HEK293 (cell line): ENCODE measurements at regions of chr9 and their contacts with region 1.

Region 1: DNA sequence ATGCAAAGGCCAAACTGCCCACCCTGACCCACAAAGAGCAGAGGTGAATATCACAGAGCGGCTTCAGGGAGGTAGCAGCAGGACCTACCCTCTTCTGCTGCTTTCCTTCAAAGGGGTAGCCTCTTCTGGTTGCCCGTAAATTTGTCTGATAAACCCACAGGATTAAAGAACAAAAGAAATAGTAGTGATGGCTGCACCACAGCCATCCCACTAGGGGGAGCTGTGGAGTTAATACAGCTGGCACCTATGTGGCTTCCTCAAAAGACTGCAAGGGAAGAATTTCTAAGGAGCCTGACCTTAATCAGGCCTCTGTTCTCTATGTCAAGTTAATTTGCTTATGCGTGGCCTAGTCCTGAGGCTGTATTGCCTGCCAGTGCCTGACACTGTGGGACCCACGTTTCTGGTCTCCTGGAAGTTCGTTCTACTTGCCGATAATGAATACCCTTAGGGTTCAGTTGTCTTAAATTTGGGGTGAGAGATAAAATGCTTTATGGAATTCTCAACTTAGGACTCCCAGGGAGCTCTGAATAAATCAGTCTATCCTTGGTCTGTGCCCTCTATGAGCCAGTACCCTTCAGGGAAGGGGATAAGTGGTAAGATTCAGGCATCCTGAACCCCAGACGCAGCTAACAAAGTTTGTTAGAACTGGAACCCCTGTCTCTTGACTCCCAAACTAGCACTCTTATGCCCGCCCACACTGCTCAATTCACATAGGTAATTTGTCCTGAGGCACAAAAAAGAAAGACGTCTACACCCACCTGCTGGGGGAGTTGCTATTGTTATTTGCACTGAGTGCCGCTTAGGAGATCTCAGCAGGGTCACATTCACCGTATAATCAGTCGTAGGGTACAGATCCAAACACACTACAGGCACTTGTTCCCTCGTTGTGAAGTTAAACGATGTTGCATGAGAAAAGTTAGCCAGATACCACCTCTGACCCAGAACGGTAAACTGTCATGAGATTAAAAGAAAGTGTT is 77.1 kb downstream of the SUSD1 start:
- H3K4me3 ChIP-seq: no peak overlapping the region
- H3K27ac ChIP-seq: no peak overlapping the region
- H3K4me1 ChIP-seq: no peaks in the 10 kb centered on the region
- CTCF ChIP-seq: 0 out of 2 replicates have a peak, but pooled peaks have one; percentile 11

Region 2: DNA sequence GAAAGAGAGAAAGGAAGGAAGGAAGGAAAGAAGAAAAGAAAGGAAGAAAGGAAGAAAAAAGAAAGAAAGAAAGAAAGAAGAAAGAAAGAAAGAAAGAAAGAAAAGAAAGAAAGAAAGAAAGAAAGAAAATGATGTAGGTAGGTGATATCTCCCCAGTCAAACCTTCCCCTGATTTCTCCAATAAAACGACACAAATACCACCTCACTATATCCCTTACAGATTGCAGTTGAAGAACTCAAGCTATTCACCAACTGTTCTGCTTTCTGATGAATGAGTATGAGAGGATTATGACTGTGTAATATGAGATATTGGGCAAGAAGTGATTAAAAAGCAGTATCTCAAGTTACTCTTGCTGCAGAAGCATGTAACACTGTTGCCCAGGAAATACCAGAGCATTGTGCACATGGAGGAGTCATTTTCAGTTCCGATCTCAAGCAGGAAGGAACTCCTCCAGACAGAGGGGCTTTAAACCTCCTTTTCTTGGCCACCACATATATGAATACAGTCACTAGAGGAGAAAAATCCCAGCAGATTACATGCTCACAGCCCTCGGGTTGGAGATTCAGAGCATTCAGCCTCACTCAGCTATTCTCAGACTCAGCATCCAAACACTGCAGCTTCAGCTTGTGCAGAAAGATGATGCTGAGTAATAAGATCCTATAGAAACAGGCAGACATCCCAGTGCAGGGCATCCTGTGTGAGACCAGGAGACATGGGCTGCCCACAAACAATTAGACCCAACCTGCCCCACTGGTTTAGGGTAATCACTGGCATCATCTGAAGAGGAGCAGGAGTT is 139.9 kb before region 1 on chr9:
- CTCF ChIA-PET with region 1: no interaction called
- POLR2A ChIA-PET with region 1: no interaction called
- H3K4me3 ChIP-seq: peak overlapping the region; percentile 11
- H3K27ac ChIP-seq: no peak overlapping the region
- H3K4me1 ChIP-seq: peaks cover 19% of the 10 kb centered on the region
- CTCF ChIP-seq: no peak

Region 3: GRCh38 chr9:112086627-112087026 is 11.4 kb before region 1 on chr9:
- CTCF ChIA-PET with region 1: interaction called, 54 read pairs
- POLR2A ChIA-PET with region 1: no interaction called
- H3K4me3 ChIP-seq: no peak overlapping the region
- H3K27ac ChIP-seq: no peak overlapping the region
- H3K4me1 ChIP-seq: no peaks in the 10 kb centered on the region
- CTCF ChIP-seq: no peak

Region 4: DNA sequence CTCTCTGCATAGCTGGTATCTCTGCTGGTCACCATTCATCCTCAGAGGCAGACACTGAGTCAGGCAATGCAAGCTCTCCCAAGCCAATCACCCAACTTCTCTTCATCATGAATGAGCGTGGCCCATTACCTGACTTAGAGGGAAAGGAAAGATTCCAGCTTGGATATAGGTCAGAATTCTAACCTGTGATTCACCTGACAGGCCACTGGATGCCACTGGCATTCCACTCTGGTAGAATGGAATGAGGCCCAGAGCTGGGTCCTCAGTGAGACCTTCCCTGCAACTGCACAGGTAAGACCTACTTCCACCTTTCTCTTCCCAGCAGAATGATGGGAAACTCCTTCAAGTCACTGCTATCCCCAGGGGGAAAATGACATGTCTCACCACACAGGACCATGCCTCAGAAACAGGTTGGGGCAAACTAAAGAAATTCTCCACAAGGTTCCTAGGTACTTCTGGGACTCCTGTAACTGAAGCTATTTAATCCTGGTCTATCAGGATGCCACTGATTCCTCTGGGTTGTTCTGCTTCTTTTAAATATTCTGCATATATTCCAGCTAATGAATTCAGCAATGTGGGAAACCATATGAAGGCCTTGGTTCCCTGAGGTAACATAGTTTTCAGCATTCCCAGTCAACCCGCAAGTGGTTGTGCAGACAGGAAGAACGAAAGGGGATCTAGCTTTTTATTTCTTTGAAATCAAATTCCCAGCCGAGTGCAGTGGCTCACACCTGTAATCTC is 15.1 kb after region 1 on chr9:
- CTCF ChIA-PET with region 1: interaction called, 26 read pairs
- POLR2A ChIA-PET with region 1: no interaction called
- H3K4me3 ChIP-seq: no peak overlapping the region
- H3K27ac ChIP-seq: no peak overlapping the region
- H3K4me1 ChIP-seq: peaks cover 5% of the 10 kb centered on the region; the same call in 1 of the 2 replicates
- CTCF ChIP-seq: 0 out of 2 replicates have a peak, but pooled peaks have one; percentile 21

Region 5: DNA sequence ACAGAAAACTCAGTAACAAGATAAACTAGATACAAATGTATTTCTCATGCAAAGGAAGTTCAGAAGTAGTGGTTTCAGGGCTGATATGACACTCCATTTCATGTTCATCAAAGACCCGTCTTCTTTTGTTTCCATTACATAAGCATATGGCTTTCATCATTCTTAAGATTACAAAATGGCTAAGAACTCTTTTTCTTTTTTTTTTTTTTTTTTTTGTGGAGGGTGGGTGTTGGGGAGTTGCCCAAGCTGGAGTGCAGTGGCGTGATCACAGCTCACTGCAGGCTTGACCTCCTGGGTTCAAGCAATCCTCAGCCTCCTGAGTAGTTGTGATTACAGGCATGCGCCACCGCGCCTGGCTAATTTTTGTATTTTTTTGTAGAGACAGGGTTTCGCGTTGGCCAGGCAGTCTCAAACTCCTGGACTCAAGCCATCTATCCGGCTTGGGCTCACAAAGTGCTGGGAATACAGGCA is 257.5 kb after region 1 on chr9:
- CTCF ChIA-PET with region 1: interaction called, 53 read pairs
- POLR2A ChIA-PET with region 1: interaction called, 7 read pairs
- H3K4me3 ChIP-seq: no peak overlapping the region
- H3K27ac ChIP-seq: no peak overlapping the region
- H3K4me1 ChIP-seq: no peaks in the 10 kb centered on the region
- CTCF ChIP-seq: no peak